Mammary epithelial cell (primary cell): ENCODE measurements at regions of chr17 and their contacts with region 1.

Region 1: DNA sequence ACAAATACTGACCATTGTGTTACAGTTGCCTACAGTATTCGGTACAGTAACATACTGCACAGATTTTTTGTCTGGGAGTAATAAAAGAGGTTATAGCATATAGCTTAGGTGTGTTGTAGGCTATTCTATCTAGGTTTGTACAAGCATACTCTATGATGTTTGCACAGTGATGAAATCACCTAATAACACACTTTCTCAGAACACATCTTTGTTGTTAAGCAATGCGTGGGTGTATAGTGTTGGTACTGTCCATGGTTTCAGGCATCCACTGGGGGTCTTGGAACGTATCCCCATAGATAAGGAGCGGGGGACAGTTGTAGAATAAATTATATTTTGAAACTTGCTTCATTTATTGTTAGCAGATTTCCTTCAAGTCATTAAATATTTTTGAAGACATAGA is 293.3 kb upstream of the TBX2 start:
- DNase-seq: no peak
- H3K4me3 ChIP-seq: no peak overlapping the region
- H3K27ac ChIP-seq: no peak overlapping the region
- H3K4me1 ChIP-seq: no peaks in the 10 kb centered on the region
- H3K27me3 ChIP-seq: no peaks in the 10 kb centered on the region
- CTCF ChIP-seq: no peak

Region 2: DNA sequence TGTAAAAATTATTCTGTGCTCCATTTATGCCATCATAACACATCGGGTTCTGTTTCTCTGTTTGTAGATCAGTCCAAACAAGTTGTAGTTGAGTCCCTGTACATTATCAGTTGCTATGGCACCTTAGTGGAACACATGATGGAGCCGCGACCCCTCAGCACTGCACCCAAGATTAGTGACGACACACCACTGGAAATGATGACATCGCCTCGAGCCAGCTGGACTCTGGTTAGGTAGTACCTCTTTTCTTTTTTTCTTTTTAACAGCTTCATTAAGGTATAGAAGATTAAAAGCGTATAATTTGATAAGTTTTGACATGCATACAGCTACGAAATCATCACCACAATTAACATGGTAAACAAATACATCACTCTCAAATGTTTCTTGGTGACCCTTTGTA is 68.5 kb before region 1 on chr17:
- CTCF ChIA-PET with region 1: interaction called, 21 read pairs
- dilution Hi-C with region 1: no loop called
- in situ Hi-C with region 1: no loop called
- intact Hi-C with region 1: no loop called
- DNase-seq: no peak
- H3K4me3 ChIP-seq: no peak overlapping the region
- H3K27ac ChIP-seq: no peak overlapping the region
- H3K4me1 ChIP-seq: no peaks in the 10 kb centered on the region
- H3K27me3 ChIP-seq: no peaks in the 10 kb centered on the region
- CTCF ChIP-seq: no peak